ENCODE measurements at regions of chr6 and their contacts with region 1.

Region 1: GRCh38 chr6:46848684-46849360 is 55.6 kb downstream of the MEP1A start:
- DNase-seq: peak; percentile 90
- H3K4me3 ChIP-seq: no peak overlapping the region
- H3K27ac ChIP-seq: no peak overlapping the region
- H3K4me1 ChIP-seq: peaks cover 0 to 7% (median 2%) of the 10 kb centered on the region in 4 donors
- H3K27me3 ChIP-seq: no peaks in the 10 kb centered on the region
- CTCF ChIP-seq: peak; percentile 83 to 97 (median 90)
- EP300 ChIP-seq: no peak
- POLR2A ChIP-seq: no peak

Region 2: GRCh38 chr6:46990031-46990644 is 141.3 kb after region 1 on chr6:
- intact Hi-C with region 1: loop called (anchors 2 kb)
- DNase-seq: no peak
- H3K4me3 ChIP-seq: no peak overlapping the region
- H3K27ac ChIP-seq: peak overlapping the region in 1 of 4 donors; percentile 43
- H3K4me1 ChIP-seq: peaks cover 0 to 7% (median 1%) of the 10 kb centered on the region in 4 donors
- H3K27me3 ChIP-seq: no peaks in the 10 kb centered on the region
- CTCF ChIP-seq: no peak
- EP300 ChIP-seq: no peak
- POLR2A ChIP-seq: no peak

Region 3: GRCh38 chr6:47047479-47048407 is 198.9 kb after region 1 on chr6:
- intact Hi-C with region 1: loop called (anchors 2 kb)
- DNase-seq: no peak
- H3K4me3 ChIP-seq: no peak overlapping the region
- H3K27ac ChIP-seq: no peak overlapping the region
- H3K4me1 ChIP-seq: peaks cover 0 to 6% (median 0%) of the 10 kb centered on the region in 4 donors
- H3K27me3 ChIP-seq: no peaks in the 10 kb centered on the region
- CTCF ChIP-seq: peak; percentile 62 to 67 (median 63)
- EP300 ChIP-seq: no peak
- POLR2A ChIP-seq: no peak

Region 4: GRCh38 chr6:47309291-47310130 is 460.7 kb after region 1 on chr6 and contains the start of gene TNFRSF21:
- intact Hi-C with region 1: loop called (anchors 1 kb)
- DNase-seq: peak; percentile 96
- H3K4me3 ChIP-seq: peak within 1 kb of the TSS; percentile 49 to 93 (median 69)
- H3K27ac ChIP-seq: peak within 1 kb of the TSS; percentile 78 to 93 (median 86)
- H3K4me1 ChIP-seq: peaks cover 0 to 43% (median 22%) of the 10 kb centered on the region in 4 donors
- H3K27me3 ChIP-seq: no peaks in the 10 kb centered on the region
- CTCF ChIP-seq: peak; percentile 86 to 97 (median 93)
- EP300 ChIP-seq: no peak
- POLR2A ChIP-seq: peak; percentile 48 to 91
- total RNA-seq, gene TNFRSF21: 15.8 to 25.3 (median 20.6) TPM

Measured in sigmoid colon (tissue), 7 donors.